ENCODE measurements at regions of chr22 and their contacts with region 1.

Region 1: DNA sequence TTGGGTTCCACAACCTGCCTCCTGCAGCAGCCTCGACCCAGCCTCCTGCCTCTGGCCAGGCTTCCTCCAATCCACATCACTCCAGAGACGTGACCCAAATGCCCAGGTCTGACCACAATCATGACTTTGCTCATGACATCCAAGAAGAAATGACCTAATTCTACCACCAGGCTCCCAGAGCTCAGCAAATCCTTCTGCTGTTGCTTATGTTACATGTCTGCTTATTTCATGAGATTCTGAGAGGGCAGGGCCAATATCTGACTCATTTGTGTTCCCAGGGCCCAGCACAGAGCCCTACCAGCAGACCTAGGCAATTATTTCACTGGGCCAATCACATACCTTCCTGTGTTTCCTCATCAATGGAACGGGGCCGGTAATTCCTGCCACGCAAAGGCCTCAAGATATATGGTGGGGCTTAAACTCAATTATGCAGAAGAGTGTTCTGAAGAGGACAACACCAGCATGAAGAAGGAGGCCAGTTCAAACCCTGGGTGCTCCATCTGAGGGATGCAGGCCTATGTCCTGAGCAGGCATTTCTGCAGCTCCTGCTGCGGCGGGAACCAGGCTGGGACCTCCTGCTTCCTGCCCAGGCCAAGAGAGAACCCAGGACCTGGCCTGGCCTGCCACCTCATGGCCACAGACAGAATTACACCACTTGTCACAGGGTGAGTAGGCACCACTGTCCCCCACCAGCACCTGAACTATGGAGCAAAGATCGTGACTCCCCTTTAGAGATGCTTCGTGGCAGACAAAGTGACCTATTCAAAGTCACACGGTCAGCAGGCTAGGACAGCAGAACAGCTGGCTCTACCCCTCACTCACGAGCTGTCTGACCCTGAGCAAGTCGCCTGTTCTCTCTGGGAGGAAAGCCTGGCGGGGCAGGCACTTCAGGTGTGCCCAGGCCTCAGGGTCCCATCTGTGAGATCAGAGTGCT is 5.9 kb downstream of the CENPM start:
- DNase-seq: peak; percentile 82
- H3K4me3 Mint-ChIP-seq: peak overlapping the region; percentile 85
- H3K27ac Mint-ChIP-seq: peak overlapping the region; percentile 100
- H3K4me1 Mint-ChIP-seq: peaks cover 53% of the 10 kb centered on the region
- H3K27me3 Mint-ChIP-seq: no peaks in the 10 kb centered on the region

Region 2: DNA sequence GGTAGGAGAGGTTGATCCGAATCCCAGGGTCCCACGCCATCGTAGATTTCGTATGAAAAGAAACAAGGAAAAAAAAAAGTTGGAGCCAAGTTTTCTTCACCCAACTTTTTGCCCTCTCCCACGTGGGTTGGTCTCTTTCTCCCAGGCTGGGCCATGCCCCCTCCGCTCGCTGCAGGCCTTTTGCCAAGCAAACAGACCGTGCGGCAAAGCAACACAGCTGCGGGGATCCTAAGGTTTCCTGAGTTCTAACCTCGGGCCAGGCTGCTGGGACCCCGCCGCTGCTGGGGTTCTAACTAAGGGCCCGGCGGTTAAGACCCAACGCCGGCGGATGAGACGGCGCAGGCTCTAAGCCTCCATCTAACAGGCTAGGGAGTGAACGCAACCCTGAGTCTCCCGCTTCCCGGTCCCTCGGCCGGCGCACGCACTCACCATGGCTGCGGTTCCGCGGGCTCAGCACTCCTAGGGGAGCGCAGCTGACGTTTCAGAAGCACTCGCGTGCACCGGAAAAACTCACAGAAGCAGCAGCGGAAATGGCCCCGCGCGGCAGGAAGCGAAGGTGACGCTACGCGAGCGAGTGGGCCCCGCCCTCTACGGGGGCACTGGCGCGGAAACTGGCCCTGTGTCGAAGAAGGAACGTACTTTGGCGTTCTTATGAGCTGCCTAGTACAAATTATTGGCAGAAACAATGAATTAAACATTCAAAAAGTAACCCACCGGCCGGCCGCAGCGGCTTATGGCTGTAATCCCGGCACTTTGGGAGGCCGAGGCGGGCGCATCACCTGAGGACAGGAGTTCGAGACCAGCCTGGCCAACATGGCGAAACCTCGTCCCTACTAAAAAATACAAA is 252.5 kb before region 1 on chr22 and contains the start of gene SNU13:
- intact Hi-C with region 1: loop called (anchors 1 kb)
- DNase-seq: peak; percentile 92
- H3K4me3 Mint-ChIP-seq: peak within 1 kb of the TSS; percentile 98
- H3K27ac Mint-ChIP-seq: peak within 1 kb of the TSS; percentile 98
- H3K4me1 Mint-ChIP-seq: peaks cover 17% of the 10 kb centered on the region
- H3K27me3 Mint-ChIP-seq: no peaks in the 10 kb centered on the region
- total RNA-seq, gene SNU13: 337 and 339 TPM in 2 replicates

Region 3: DNA sequence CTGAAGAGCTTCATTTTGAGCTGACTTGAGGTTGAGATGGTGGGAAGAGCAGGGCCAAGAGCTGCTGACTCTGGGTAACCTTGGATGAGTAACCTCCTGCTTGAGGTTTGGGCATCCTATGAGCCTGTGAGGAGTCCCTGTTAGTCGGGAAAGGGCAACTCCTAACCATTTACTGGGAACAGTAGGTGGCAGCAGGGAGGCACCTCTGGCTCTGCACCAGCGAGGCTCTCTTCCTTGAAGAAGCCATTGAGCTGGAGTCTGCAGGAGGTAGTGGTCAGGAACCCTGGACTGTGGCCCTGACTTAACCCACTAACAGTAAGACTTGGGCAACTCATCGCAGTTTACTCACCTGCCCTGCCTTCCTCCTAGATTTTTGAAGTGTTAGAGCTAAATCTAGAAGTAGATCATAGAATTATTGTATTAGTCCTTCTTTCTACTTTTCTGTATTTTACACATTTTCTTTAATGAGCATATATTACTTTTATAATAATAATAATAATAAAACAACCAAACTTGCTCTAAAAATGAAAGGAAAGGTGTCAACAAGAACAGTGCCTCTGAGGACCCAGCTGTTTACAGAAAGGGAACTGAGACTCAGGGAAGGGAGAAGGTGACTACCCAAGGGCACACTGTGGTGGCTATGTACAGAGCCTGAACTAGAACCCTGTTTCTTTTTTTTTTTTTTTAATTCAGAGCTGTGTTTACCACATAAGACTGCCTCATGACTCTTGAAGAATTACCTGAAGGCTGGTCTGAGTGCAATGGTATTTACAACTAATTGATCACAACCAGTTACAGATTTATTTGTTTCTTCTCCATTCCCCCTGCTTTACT is 194.3 kb before region 1 on chr22:
- intact Hi-C with region 1: loop called (anchors 1 kb)
- DNase-seq: peak; percentile 42
- H3K4me3 Mint-ChIP-seq: no peak overlapping the region
- H3K27ac Mint-ChIP-seq: no peak overlapping the region
- H3K4me1 Mint-ChIP-seq: peaks cover 8% of the 10 kb centered on the region
- H3K27me3 Mint-ChIP-seq: peaks cover 41% of the 10 kb centered on the region

Region 4: DNA sequence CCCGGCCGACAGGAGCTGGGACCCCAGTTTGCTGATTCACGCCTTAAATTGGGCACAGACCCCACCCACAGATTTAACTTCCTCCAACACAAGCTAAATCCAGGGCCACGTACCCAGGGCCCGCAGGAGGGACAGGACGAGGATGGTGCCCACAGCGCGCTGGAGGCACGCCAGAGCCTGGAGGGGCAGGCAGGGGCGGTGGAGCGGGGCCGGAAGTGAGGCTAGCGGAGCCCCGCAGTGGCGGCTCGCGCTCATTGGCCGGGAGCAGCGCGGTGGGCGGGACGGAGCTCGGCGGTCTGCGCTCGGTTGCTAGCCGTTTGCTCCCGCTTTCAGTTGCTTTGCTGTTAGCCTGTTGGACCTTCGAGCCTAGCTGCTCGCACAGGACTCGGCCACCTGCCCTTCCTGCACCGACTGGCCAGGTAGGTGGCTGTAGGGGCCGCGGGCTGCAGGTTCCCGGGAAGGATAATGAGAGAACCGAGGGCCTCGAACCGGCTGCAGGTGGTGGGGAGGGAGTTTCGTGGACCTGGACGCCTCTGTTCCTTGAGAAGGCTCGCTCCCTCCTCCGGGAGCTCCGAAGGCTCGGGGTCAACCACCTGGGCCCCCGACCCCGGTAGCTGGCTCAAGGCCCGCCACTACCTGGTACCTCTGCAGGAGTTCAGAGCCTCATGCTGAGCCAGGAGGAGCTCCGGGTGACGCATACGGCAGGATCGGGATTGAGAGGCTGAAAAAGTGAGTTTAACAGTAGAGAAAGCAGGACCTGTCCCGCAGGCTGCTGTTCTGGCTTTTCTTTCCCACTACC is 140.6 kb before region 1 on chr22 and contains the start of gene CCDC134:
- intact Hi-C with region 1: loop called (anchors 1 kb)
- DNase-seq: peak; percentile 90
- H3K4me3 Mint-ChIP-seq: peak within 1 kb of the TSS; percentile 99
- H3K27ac Mint-ChIP-seq: peak within 1 kb of the TSS; percentile 98
- H3K4me1 Mint-ChIP-seq: peaks cover 35% of the 10 kb centered on the region
- H3K27me3 Mint-ChIP-seq: no peaks in the 10 kb centered on the region
- total RNA-seq, gene CCDC134: 18.0 and 19.6 TPM in 2 replicates

Region 5: GRCh38 chr22:41832553-41833368 is 108.3 kb before region 1 on chr22 and contains the start of gene SREBF2:
- intact Hi-C with region 1: loop called (anchors 1 kb)
- DNase-seq: peak; percentile 99
- H3K4me3 Mint-ChIP-seq: peak within 1 kb of the TSS; percentile 96
- H3K27ac Mint-ChIP-seq: peak within 1 kb of the TSS; percentile 98
- H3K4me1 Mint-ChIP-seq: peaks cover 51% of the 10 kb centered on the region
- H3K27me3 Mint-ChIP-seq: peaks cover 2% of the 10 kb centered on the region
- total RNA-seq, gene SREBF2: 235 and 245 TPM in 2 replicates

Region 6: GRCh38 chr22:41873391-41873790 is 67.7 kb before region 1 on chr22:
- intact Hi-C with region 1: loop called (anchors 1 kb)
- DNase-seq: peak; percentile 10
- H3K4me3 Mint-ChIP-seq: peak overlapping the region; percentile 76
- H3K27ac Mint-ChIP-seq: peak overlapping the region; percentile 82
- H3K4me1 Mint-ChIP-seq: peaks cover 67% of the 10 kb centered on the region
- H3K27me3 Mint-ChIP-seq: no peaks in the 10 kb centered on the region

Region 7: DNA sequence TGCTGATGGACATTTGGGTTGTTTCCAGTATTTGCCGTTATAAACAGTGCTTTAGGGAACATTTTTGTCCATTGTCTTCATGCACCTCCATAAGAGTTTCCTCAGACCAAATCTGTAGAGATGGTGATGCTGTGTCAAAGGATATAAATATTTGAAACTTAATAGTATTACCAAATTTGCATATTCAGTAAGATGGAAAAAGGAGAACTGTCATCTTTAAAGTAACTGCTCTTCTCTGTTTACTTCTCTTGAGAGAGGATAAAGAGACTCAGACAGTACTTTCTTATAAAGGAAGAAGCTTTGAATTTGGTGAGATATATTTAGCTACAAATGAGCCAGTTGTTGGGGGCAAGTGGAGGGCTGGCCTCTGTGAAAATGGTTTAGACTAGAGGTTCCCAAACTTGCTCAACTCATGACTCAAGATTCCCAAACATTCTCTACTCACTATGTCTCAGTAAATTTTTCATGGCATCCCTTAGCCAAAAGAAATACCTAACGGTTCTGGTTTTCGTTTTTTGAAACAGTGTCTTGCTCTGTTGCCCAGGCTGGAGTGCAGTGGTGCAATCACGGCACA is 52.4 kb before region 1 on chr22:
- intact Hi-C with region 1: no loop called
- DNase-seq: no peak
- H3K4me3 Mint-ChIP-seq: no peak overlapping the region
- H3K27ac Mint-ChIP-seq: no peak overlapping the region
- H3K4me1 Mint-ChIP-seq: no peaks in the 10 kb centered on the region
- H3K27me3 Mint-ChIP-seq: no peaks in the 10 kb centered on the region

Region 8: DNA sequence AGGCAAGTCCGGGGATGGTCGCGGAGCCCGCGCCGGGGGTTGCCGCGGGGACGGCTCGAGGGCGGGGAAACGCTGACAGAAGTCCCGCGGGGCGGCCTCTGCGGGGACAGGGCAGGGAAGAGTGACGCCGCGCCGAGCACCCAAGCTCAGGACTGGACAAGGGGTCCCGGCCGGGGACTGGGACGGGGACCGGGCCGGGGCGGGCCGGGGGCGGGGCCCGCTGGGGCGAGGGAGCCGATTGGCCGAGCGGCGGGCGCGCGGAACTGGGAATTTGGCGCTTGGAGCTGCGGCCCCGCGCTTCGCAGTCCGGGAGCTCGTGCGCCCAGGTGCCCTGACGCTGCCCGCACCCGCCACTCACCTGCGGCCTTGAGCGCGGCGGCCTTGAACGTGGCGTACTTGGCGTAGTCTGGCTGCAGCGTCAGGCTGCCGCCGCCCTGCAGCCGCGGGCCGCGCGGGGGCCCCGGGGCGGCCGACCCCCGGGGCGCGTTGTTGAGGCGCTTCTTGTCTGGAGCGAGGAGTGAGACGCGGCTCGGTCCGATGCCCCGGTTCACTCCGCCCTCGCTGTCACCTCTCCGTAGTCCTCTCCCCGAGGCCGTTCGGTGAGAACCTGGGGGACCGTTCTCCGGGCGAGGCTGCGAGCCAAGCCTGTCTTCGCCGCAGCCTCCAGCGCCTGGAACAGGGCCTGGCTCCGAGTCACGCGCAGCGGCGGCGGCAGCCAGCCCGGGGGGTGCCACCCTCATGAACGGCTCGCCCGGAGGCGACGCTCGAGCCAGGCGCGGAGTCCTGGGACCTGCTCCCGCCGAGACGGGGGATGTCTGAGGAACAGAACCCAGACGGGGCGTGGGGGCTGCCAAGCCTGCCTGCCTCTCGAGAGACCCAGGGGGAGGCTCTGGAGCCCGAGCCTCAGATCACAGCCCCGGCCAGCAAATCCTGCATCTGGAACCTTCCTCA is 30.8 kb before region 1 on chr22:
- intact Hi-C with region 1: no loop called
- DNase-seq: no peak
- H3K4me3 Mint-ChIP-seq: no peak overlapping the region
- H3K27ac Mint-ChIP-seq: no peak overlapping the region
- H3K4me1 Mint-ChIP-seq: peaks cover 38% of the 10 kb centered on the region
- H3K27me3 Mint-ChIP-seq: peaks cover 33% of the 10 kb centered on the region

Region 9: DNA sequence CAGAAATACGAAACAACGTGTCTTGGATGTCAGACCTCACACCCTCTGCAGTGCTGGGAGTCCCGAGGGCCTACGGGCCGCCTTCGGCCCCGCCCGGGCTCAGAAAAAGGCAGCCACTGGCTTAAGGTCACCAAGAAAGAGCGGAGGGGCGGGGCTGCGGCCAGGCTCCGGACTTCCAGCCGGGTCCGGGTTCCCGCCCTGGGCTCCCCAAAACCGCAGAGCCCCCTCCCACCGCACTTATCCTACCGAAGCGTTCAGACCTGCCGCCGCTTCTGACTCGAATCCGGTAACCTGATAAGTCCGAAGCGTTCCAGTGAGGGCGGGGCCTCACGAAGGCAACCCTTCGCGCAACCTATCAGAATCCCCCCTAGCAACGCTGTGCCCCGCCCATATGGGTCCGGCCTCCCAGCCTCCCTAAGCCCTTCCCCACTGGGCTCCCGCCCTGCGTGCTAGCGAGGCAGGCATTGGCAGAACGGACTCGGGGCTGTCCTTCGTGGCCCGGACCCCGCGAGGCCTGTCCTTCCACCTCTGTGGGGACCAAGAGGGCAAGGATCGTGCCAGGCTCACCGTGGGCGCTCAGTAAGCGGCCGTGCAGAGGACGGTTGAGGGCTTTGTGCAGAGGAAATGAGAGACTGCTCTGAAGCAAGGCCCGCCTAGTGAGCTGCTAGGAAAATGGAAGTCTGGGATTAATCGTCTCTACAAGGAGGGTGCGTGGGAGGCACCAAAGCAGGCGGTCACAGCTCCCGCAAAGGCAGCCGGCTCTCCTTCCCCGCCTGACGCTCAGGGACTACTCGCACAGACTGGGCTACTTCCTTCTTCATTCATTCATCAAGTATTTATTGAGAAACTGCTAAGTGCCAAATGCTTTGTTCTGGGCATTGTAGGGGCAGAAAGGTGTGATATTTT is 129.7 kb after region 1 on chr22 and contains the start of gene NAGA:
- intact Hi-C with region 1: loop called (anchors 1 kb)
- DNase-seq: peak; percentile 91
- H3K4me3 Mint-ChIP-seq: peak within 1 kb of the TSS; percentile 92
- H3K27ac Mint-ChIP-seq: peak within 1 kb of the TSS; percentile 94
- H3K4me1 Mint-ChIP-seq: peaks cover 53% of the 10 kb centered on the region
- H3K27me3 Mint-ChIP-seq: peaks cover 2% of the 10 kb centered on the region
- total RNA-seq, gene NAGA: 30.5 and 30.9 TPM in 2 replicates

Measured in activated T-helper 1 cell treated with anti-CD3 and anti-CD28 coated beads, Interleukin-12 subunit alpha, Interleukin-12 subunit beta, Interleukin-2, Interleukin-4 antibody, amounts not matched to agents 30 ng/mL and 10 ng/mL and 1 ng/mL, durations not matched to agents 14 hours and 24 hours and 36 hours (primary cell).